ENCODE measurements at regions of chr1 and their contacts with region 1.

Region 1: DNA sequence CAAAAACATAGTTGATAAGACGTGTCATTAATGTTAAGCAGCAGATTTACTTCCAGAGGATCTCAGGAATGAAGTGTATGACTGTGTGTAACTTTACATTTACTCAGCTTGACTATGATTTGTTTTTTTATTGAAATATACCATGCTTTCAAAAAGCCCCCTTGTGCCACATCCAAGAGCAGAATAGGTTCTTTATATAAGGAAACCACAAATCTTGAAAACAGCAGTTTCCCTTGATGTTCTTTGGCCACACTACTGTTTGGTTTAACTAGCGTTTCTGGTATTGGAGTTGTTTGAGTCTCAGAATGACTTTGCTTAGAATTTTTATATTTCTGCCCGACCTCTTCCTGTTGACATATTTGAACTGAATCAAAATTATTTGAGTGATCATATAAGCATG is 25.0 kb downstream of the LRRC8C start:
- DNase-seq: no peak
- ATAC-seq: peak; percentile 75
- H3K4me3 Mint-ChIP-seq: peak overlapping the region; percentile 19
- H3K27ac Mint-ChIP-seq: peak overlapping the region; percentile 80
- H3K4me1 Mint-ChIP-seq: peaks cover 86% of the 10 kb centered on the region
- H3K27me3 Mint-ChIP-seq: no peaks in the 10 kb centered on the region

Region 2: DNA sequence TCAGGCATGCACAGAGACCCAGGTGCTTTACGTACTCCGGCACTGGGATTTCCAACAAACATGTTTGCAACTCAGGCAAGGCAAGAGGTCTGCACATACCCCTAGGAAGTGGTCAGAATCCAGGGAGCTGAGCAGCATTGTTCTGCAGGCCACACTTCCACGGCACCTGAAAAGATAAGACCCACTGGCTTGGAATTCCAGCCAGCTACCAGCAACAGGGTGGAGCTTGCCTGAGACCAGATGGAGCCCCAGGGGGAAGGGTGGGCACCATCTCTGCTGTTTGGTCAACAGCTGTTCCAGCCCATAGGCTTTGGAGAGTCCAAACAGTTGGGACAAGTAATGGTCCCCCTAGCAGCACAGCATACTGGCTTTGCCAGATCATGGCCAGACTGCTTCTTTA is 184.9 kb before region 1 on chr1:
- CTCF ChIA-PET with region 1: no interaction called
- DNase-seq: no peak
- ATAC-seq: no peak
- H3K4me3 Mint-ChIP-seq: no peak overlapping the region
- H3K27ac Mint-ChIP-seq: no peak overlapping the region
- H3K4me1 Mint-ChIP-seq: no peaks in the 10 kb centered on the region
- H3K27me3 Mint-ChIP-seq: peaks cover 34% of the 10 kb centered on the region

Region 3: DNA sequence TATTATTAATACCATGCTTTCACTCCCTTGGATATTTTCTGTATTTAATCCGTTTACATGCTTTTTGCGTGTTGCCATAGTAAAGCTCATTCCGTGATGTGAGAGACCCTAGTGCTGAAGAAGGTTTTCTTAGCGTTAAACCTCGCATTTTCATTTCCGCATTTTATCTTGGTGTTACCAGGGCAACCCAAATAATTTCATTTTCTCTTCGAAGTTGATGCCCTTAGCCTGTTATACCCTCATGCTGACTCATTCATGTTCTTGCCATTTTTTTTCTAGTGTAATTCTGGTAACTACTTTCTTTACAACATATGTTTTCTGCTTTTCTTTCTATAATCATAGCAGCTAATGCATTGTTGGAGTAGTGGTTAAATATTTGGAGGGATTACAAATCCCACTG is 12.3 kb after region 1 on chr1:
- CTCF ChIA-PET with region 1: interaction called, 24 read pairs
- DNase-seq: no peak
- ATAC-seq: peak; percentile 87
- H3K4me3 Mint-ChIP-seq: peak overlapping the region; percentile 60
- H3K27ac Mint-ChIP-seq: peak overlapping the region; percentile 81
- H3K4me1 Mint-ChIP-seq: peaks cover 85% of the 10 kb centered on the region
- H3K27me3 Mint-ChIP-seq: no peaks in the 10 kb centered on the region